ENCODE measurements at regions of chr1 and their contacts with region 1.

Region 1: DNA sequence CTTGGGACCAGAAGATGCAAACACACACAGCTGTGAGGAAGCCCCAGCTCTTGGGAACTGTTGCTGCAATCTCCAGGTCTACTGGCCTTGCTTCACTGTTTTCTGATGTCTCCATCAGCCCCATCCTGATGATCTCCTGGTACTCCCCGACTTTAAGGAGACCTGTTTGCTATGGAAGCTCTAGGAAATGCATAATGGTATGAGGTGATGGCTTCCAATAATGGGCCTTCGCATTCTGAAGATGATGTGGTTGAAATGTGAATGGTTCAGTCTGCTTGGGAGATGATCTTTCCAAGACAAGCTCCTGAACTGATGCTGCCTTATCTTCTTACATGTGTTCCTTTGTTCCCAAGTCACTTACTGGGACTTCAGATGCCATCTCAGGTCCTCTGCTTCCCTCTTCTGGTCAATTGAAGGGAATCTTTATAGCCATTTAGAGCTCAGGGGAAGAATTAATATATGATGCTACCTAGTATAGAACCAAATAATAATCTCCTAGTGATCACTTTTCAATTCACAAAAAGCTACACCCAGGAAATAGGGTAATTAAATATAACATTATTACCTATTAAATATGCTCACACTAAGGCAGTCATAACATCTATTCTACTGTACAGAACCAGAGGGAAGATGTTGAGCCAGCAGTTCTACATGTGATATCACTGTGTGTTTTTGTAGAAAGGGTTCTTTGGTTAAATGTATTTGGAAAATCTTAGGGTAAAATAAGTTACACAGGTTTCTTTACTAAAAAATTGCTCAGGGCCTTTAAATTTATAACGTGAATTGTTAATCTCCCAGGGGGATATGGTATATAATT is 73.9 kb upstream of the VTCN1 start:
- DNase-seq: peak; percentile 62
- H3K4me3 ChIP-seq: no peak overlapping the region; a peak in 1 of 4 replicates
- H3K27ac ChIP-seq: no peak overlapping the region
- H3K4me1 ChIP-seq: no peaks in the 10 kb centered on the region
- H3K27me3 ChIP-seq: 0 out of 2 replicates have a peak, but pooled peaks cover under 1% of the 10 kb centered on the region
- CTCF ChIP-seq: peak; percentile 75
- EP300 ChIP-seq: no peak
- RAD21 ChIP-seq: peak; percentile 94

Region 2: DNA sequence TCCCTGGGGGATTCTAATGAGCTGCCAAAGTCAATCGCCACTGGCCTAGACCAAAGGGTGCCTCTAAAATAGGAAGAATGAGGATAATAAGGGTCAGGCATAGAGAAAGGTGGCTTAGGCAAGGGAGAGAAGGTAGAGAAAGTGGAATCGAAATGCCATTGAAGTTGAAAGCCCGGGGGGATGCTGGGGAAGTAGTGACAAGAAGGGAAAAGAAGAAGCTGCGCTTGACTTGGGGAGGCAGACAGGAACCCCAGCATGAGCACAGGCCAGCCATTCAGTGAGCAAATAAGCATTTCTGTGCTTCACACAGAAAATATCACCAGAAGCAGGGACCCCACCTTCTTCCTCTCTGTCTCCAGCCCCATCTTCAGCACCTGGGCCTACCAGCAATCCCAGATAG is 528.9 kb before region 1 on chr1:
- CTCF ChIA-PET with region 1: no interaction called
- POLR2A ChIA-PET with region 1: no interaction called
- DNase-seq: no peak
- H3K4me3 ChIP-seq: no peak overlapping the region
- H3K27ac ChIP-seq: no peak overlapping the region
- H3K4me1 ChIP-seq: no peaks in the 10 kb centered on the region
- H3K27me3 ChIP-seq: no peaks in the 10 kb centered on the region
- CTCF ChIP-seq: no peak
- EP300 ChIP-seq: no peak
- RAD21 ChIP-seq: no peak

Region 3: DNA sequence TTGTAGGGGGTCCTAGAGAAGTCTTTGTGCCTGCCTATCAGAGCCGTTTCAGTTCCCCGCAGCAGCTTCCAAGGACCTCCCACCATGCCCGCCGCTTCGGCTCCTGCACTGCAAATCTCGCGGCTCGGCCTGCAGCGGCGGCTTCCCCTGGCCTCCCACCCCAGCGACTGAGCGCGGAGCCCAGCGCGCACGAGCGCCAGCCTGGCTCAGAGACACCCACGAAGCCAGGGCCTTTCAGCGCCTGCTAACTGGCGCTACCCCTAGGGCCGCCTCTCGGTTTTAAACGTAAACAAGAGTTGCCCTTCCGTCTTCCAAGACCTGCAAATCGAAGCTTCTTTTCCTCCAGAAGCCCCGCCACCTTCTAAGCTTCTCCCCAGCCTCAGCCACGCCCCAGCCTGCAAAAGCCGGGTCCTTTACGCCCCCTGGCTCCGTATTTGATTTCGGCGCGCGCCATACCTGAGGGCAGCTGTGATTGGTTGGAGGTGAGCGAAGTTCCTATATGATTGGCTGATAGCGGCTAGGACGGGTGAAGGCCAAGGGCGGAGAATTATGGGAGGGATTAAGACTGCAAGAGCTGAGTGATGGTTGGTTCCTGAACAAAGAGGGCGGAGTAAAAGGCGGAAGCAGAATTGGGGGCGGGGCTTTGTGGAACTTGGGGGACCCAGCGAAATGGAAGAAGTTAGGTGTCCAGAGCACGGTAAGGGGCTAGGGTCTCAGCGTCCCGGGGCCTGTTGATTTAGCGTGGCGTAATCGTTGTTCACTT is 224.7 kb before region 1 on chr1 and contains the start of gene TTF2:
- CTCF ChIA-PET with region 1: interaction called, 128 read pairs
- POLR2A ChIA-PET with region 1: no interaction called
- DNase-seq: peak; percentile 96
- H3K4me3 ChIP-seq: peak within 1 kb of the TSS; percentile 76 to 91
- H3K27ac ChIP-seq: peak within 1 kb of the TSS; percentile 53 to 83; a peak in 3 of 4 replicates
- H3K4me1 ChIP-seq: peaks cover 7 to 13% of the 10 kb centered on the region in 2 experiments; a peak in 3 of 4 replicates
- H3K27me3 ChIP-seq: no peaks in the 10 kb centered on the region
- CTCF ChIP-seq: no peak
- EP300 ChIP-seq: no peak
- RAD21 ChIP-seq: no peak
- polyA plus RNA-seq, gene TTF2: 10.8 and 12.2 TPM in 2 replicates

Region 4: GRCh38 chr1:117079737-117080136 is 204.9 kb before region 1 on chr1:
- CTCF ChIA-PET with region 1: interaction called, 10 read pairs
- POLR2A ChIA-PET with region 1: no interaction called
- DNase-seq: no peak
- H3K4me3 ChIP-seq: no peak overlapping the region
- H3K27ac ChIP-seq: no peak overlapping the region
- H3K4me1 ChIP-seq: 0 out of 4 replicates have a peak, but pooled peaks cover 0 to 6% of the 10 kb centered on the region in 2 experiments
- H3K27me3 ChIP-seq: no peaks in the 10 kb centered on the region
- CTCF ChIP-seq: no peak
- EP300 ChIP-seq: no peak
- RAD21 ChIP-seq: no peak

Region 5: GRCh38 chr1:117101334-117101733 is 183.3 kb before region 1 on chr1:
- CTCF ChIA-PET with region 1: no interaction called
- POLR2A ChIA-PET with region 1: no interaction called
- DNase-seq: no peak
- H3K4me3 ChIP-seq: no peak overlapping the region
- H3K27ac ChIP-seq: no peak overlapping the region
- H3K4me1 ChIP-seq: peaks cover 0 to 16% of the 10 kb centered on the region in 2 experiments; a peak in 1 of 4 replicates
- H3K27me3 ChIP-seq: no peaks in the 10 kb centered on the region
- CTCF ChIP-seq: no peak
- EP300 ChIP-seq: no peak
- RAD21 ChIP-seq: no peak

Region 6: DNA sequence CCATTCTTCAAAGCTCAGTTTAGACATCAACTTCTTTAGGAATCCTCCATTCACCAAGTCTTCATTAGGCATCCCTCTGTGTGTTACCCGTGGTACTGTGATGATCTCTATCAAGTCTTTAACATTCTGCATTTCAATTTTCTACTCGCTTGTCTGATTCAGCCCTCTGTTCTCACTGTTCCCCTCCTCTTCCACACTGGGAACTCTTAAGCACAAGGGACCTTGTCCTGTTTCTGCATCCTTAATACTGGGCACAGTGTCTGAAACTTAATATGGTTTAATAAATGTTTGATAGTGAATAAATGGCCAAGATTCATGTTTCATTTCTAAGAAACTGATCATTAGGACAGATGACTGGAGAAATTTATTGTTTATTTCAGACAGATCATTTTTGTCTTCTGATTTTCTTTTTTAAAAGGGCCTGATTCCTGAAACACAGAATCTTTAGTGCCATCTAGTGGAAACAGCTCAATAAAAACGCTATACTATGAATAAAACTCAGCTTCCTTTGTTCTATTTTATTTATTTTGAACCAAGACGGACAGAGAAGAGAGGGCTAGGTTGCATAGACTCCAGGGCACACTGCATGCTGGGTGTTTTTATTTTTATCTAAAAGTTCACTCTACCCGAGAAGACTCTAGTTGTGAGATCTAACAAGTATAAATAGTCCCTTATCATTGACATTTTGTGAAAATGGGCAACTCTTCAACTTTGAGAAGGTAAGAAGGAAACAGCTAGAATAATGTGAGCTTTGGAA is 156.1 kb before region 1 on chr1:
- CTCF ChIA-PET with region 1: interaction called, 27 read pairs
- POLR2A ChIA-PET with region 1: no interaction called
- DNase-seq: peak; percentile 47
- H3K4me3 ChIP-seq: no peak overlapping the region; a peak in 1 of 4 replicates
- H3K27ac ChIP-seq: peak overlapping the region in 1 of 2 experiments; percentile 42; a peak in 1 of 4 replicates
- H3K4me1 ChIP-seq: peaks cover 0 to 8% of the 10 kb centered on the region in 2 experiments; a peak in 2 of 4 replicates
- H3K27me3 ChIP-seq: no peaks in the 10 kb centered on the region
- CTCF ChIP-seq: peak; percentile 76
- EP300 ChIP-seq: no peak
- RAD21 ChIP-seq: peak; percentile 69

Region 7: GRCh38 chr1:117268535-117269455 is 15.8 kb before region 1 on chr1:
- CTCF ChIA-PET with region 1: interaction called, 12 read pairs
- POLR2A ChIA-PET with region 1: no interaction called
- DNase-seq: peak; percentile 10
- H3K4me3 ChIP-seq: no peak overlapping the region
- H3K27ac ChIP-seq: no peak overlapping the region
- H3K4me1 ChIP-seq: peaks cover 0 to 9% of the 10 kb centered on the region in 2 experiments; a peak in 1 of 4 replicates
- H3K27me3 ChIP-seq: no peaks in the 10 kb centered on the region
- CTCF ChIP-seq: no peak
- EP300 ChIP-seq: no peak
- RAD21 ChIP-seq: no peak

Region 8: DNA sequence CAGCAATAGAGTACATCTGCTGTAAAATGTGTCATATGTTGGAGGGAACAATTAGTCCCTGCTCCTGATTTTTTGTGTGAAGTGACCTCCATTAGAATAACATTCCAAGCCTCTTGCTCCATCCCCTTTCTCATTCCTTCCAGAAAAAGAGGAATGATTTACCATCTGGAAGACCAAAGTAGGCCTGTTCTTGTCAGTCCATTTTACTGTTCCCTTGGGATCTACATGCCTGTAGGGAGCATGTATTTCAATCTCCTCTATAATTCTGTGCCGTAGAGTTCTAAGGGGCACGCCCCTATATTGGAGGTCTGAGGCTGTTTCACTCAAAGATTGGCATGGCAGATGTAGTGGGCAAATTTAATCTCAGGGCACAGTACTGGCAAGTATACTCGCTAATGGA is 33.8 kb after region 1 on chr1:
- CTCF ChIA-PET with region 1: no interaction called
- POLR2A ChIA-PET with region 1: no interaction called
- DNase-seq: no peak
- H3K4me3 ChIP-seq: no peak overlapping the region
- H3K27ac ChIP-seq: no peak overlapping the region
- H3K4me1 ChIP-seq: peaks cover 0 to 5% of the 10 kb centered on the region in 2 experiments; a peak in 1 of 4 replicates
- H3K27me3 ChIP-seq: peaks cover 11% of the 10 kb centered on the region
- CTCF ChIP-seq: no peak
- EP300 ChIP-seq: no peak
- RAD21 ChIP-seq: no peak

Measured in SK-N-SH (cell line).